Aorta (tissue), 5 donors: ENCODE measurements at regions of chr3 and their contacts with region 1.

Region 1: GRCh38 chr3:95645291-95645690 is 1169.1 kb upstream of the EPHA6 start:
- DNase-seq: no peak
- ATAC-seq: no peak
- H3K4me3 ChIP-seq: no peak overlapping the region
- H3K27ac ChIP-seq: no peak overlapping the region
- H3K4me1 ChIP-seq: no peaks in the 10 kb centered on the region
- H3K27me3 ChIP-seq: no peaks in the 10 kb centered on the region

Region 2: DNA sequence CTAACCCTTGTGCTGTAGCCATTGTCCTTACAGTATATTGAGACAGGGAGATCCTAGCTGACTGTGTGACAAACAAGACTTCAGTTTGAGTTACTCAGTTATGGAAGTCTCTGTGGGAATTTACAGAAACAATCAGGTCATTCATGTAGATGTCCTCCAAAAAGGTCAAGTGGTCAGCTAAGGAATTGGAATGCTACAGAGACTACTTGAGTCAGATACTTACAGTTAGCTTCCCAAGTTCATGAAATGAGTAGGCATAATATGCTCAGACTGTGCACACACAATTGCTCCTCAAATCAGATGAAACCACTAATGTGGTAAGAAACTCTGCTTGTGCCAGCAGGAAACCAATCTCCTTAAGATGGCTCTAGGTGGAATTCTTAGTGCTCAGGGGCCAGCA is 596.7 kb before region 1 on chr3:
- intact Hi-C with region 1: loop called in 1 of 2 experiments (anchors 5 kb)
- DNase-seq: no peak
- ATAC-seq: no peak
- H3K4me3 ChIP-seq: no peak overlapping the region
- H3K27ac ChIP-seq: no peak overlapping the region
- H3K4me1 ChIP-seq: no peaks in the 10 kb centered on the region
- H3K27me3 ChIP-seq: no peaks in the 10 kb centered on the region

Region 3: GRCh38 chr3:95521395-95521794 is 123.9 kb before region 1 on chr3:
- intact Hi-C with region 1: no loop called
- DNase-seq: no peak
- ATAC-seq: no peak
- H3K4me3 ChIP-seq: no peak overlapping the region
- H3K27ac ChIP-seq: no peak overlapping the region
- H3K4me1 ChIP-seq: no peaks in the 10 kb centered on the region
- H3K27me3 ChIP-seq: no peaks in the 10 kb centered on the region

Region 4: GRCh38 chr3:96347289-96347688 is 702.0 kb after region 1 on chr3:
- intact Hi-C with region 1: no loop called
- DNase-seq: no peak
- ATAC-seq: no peak
- H3K4me3 ChIP-seq: no peak overlapping the region
- H3K27ac ChIP-seq: no peak overlapping the region
- H3K4me1 ChIP-seq: no peaks in the 10 kb centered on the region
- H3K27me3 ChIP-seq: no peaks in the 10 kb centered on the region